Naive thymus-derived CD8-positive, alpha-beta T cell (primary cell): ENCODE measurements at regions of chr17 and their contacts with region 1.

Region 1: GRCh38 chr17:7351665-7352501 is at the start of gene KCTD11:
- DNase-seq: peak; percentile 51 to 81 (median 62)
- ATAC-seq: peak; percentile 38 to 51
- H3K4me3 Mint-ChIP-seq: peak within 1 kb of the TSS; percentile 74 to 92 (median 86)
- H3K27ac Mint-ChIP-seq: peak within 1 kb of the TSS; percentile 78 to 91 (median 86)
- H3K4me1 Mint-ChIP-seq: peaks cover 19 to 82% (median 55%) of the 10 kb centered on the region in 4 donors
- H3K27me3 Mint-ChIP-seq: no peaks in the 10 kb centered on the region
- polyA plus RNA-seq, gene KCTD11: 1.2 to 1.6 (median 1.3) TPM

Region 2: GRCh38 chr17:7314719-7315569 is 36.9 kb before region 1 on chr17 and contains the start of gene GPS2:
- POLR2A ChIA-PET with region 1: interaction called, 30 read pairs
- DNase-seq: peak; percentile 88 to 95 (median 92)
- ATAC-seq: peak; percentile 83 to 89
- H3K4me3 Mint-ChIP-seq: peak within 1 kb of the TSS; percentile 81 to 97 (median 91)
- H3K27ac Mint-ChIP-seq: peak within 1 kb of the TSS; percentile 88 to 98 (median 96)
- H3K4me1 Mint-ChIP-seq: peaks cover 29 to 65% (median 53%) of the 10 kb centered on the region in 4 donors
- H3K27me3 Mint-ChIP-seq: no peaks in the 10 kb centered on the region
- polyA plus RNA-seq, gene GPS2: 75.7 to 107 (median 98.6) TPM

Region 3: GRCh38 chr17:7329374-7329996 is 22.4 kb before region 1 on chr17:
- POLR2A ChIA-PET with region 1: interaction called, 45 read pairs
- DNase-seq: peak; percentile 89 to 99 (median 95)
- ATAC-seq: peak; percentile 58 to 64
- H3K4me3 Mint-ChIP-seq: peak overlapping the region; percentile 90 to 98 (median 96)
- H3K27ac Mint-ChIP-seq: peak overlapping the region; percentile 94 to 98 (median 98)
- H3K4me1 Mint-ChIP-seq: peaks cover 30 to 53% (median 43%) of the 10 kb centered on the region in 4 donors
- H3K27me3 Mint-ChIP-seq: peaks cover 0 to 2% (median 0%) of the 10 kb centered on the region in 5 donors

Region 4: GRCh38 chr17:7367918-7368598 is 16.2 kb after region 1 on chr17:
- POLR2A ChIA-PET with region 1: no interaction called
- DNase-seq: no peak
- ATAC-seq: no peak
- H3K4me3 Mint-ChIP-seq: no peak overlapping the region
- H3K27ac Mint-ChIP-seq: no peak overlapping the region
- H3K4me1 Mint-ChIP-seq: no peaks in the 10 kb centered on the region
- H3K27me3 Mint-ChIP-seq: no peaks in the 10 kb centered on the region

Region 5: DNA sequence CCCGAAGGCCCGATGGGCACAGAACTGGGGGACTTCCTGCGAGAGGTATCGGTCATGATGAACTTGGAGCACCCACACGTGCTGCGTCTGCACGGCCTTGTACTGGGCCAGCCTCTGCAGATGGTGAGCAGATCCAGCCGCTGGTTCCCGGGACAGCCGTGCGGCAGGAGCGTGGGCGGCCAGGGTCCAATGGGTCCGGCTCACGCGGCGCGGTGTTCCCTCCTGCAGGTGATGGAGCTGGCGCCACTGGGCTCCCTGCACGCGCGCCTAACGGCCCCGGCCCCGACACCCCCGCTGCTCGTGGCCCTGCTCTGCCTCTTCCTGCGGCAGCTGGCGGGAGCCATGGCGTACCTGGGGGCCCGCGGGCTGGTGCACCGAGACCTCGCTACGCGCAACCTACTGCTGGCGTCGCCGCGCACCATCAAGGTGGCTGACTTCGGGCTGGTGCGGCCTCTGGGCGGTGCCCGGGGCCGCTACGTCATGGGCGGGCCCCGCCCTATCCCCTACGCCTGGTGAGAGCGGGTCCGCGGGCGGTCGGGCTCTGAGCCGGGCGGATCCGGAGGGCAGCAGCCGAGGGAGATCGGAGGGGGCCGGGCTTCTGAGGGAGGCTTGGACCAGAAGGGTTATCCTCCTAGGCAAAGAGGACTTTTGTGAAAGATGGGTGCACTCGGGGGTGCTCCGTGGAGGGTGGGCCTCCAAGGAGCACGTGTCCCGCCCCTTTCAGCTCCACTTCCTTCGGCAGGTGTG is 32.0 kb after region 1 on chr17:
- POLR2A ChIA-PET with region 1: interaction called, 10 read pairs
- DNase-seq: peak; percentile 65 to 93 (median 82)
- ATAC-seq: peak; percentile 95
- H3K4me3 Mint-ChIP-seq: peak overlapping the region; percentile 77 to 94 (median 86)
- H3K27ac Mint-ChIP-seq: peak overlapping the region; percentile 48 to 97 (median 96)
- H3K4me1 Mint-ChIP-seq: peaks cover 15 to 42% (median 24%) of the 10 kb centered on the region in 4 donors
- H3K27me3 Mint-ChIP-seq: peaks cover 14 to 33% (median 29%) of the 10 kb centered on the region in 5 donors

Region 6: DNA sequence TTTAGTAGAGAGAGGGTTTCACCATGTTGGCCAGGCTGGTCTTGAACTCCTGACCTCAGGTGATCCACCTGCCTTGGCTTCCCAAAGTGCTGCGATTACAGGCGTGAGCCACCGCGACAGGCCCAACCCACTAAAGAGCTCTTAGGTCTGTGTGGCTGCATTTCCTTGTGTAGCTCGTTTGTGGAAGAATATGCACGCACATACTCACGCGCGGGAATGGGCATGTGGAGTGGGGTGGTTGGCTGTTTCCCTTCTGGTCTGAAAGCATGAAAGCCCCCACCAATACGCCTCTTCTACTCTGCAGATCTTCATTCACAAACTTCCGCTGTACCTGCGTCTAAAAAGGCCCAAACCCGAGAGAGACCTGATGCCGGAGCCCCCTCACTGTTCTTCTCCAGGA is 103.1 kb after region 1 on chr17:
- POLR2A ChIA-PET with region 1: interaction called, 14 read pairs
- DNase-seq: no peak
- ATAC-seq: peak in 1 of 2 donors; percentile 55
- H3K4me3 Mint-ChIP-seq: peak overlapping the region; percentile 87 to 99 (median 96)
- H3K27ac Mint-ChIP-seq: peak overlapping the region; percentile 86 to 98 (median 92)
- H3K4me1 Mint-ChIP-seq: peaks cover 19 to 45% (median 23%) of the 10 kb centered on the region in 4 donors
- H3K27me3 Mint-ChIP-seq: no peaks in the 10 kb centered on the region